SK-N-SH (cell line): ENCODE measurements at regions of chr5 and their contacts with region 1.

Region 1: DNA sequence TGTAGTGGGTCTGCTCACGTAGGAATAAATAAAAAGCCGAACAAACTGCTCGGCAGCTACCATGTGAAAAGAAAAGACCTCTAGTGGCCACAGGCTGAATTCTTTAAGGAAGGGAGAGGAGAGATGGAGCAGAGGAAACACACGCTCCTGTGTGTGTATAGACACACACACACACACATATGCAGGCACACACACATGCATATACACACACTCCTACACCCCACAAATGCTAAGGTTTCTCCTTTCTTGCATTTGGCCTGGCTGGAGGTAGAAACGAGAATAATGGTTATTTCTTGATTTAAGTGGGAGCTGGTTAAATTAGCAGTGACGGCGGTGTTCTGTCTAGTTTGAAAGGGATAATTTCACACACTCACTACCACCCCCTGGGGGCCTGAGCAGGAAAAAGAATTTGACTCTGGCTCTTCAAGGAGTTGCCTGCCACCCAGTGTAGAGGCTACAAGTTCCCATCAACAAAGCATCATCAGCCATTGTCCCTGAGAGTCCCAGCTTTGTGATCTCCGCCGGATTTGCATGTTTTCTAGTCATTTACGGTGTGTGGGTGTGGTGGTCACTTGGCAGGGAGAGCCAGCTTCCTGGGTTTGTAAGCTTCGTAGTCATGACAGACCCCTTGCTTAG is at the start of gene INSYN2B:
- DNase-seq: peak; percentile 63
- H3K4me3 ChIP-seq: peak within 1 kb of the TSS; percentile 58 to 85
- H3K27ac ChIP-seq: peak within 1 kb of the TSS; percentile 32 to 92; a peak in 3 of 4 replicates
- H3K4me1 ChIP-seq: peaks cover 2 to 24% of the 10 kb centered on the region in 2 experiments; a peak in 3 of 4 replicates
- H3K27me3 ChIP-seq: no peaks in the 10 kb centered on the region
- CTCF ChIP-seq: peak; percentile 90
- EP300 ChIP-seq: no peak
- RAD21 ChIP-seq: peak; percentile 67
- polyA plus RNA-seq, gene INSYN2B: 9.2 and 13.4 TPM in 2 replicates

Region 2: DNA sequence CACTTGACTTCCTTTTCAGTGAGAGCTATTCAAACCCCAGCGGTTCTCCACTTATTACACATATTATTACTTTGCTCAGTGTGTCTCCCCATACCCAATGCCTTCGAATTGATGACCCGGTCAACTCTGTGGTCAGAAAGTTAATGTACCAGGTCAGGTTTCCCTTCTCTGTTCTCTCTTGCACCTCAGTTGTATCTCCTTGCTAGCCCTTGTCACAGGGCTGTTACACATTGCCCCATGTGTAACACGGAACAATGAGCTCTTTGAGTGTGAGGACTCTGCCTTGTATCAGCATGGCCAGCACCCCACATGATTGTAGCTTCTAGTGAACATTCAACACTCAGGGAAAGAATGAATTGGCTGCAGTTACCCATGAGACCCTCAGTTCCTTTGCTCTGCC is 269.9 kb before region 1 on chr5:
- CTCF ChIA-PET with region 1: interaction called, 34 read pairs
- POLR2A ChIA-PET with region 1: no interaction called
- DNase-seq: no peak
- H3K4me3 ChIP-seq: no peak overlapping the region
- H3K27ac ChIP-seq: no peak overlapping the region
- H3K4me1 ChIP-seq: peaks cover 0 to 18% of the 10 kb centered on the region in 2 experiments; a peak in 3 of 4 replicates
- H3K27me3 ChIP-seq: no peaks in the 10 kb centered on the region
- CTCF ChIP-seq: no peak
- EP300 ChIP-seq: no peak
- RAD21 ChIP-seq: no peak

Region 3: DNA sequence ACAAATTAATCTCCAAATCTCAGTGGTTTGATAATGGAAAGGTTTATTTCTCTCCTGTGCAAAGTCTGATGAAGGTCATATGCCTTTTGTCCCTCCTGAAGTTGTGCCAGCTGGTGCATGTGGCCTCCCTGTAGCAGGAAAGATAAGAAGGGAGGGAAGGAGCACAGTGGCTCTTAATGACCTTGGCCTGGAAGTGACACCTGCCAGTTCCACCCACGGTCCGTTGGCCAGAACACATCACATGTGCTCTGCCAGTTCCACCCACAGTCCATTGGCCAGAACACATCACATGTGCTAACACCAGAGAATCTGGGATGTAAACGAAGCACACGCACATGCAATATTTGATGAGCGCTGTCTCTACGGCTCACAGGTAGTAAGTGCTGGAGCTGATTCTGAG is 212.6 kb before region 1 on chr5:
- CTCF ChIA-PET with region 1: interaction called, 12 read pairs
- POLR2A ChIA-PET with region 1: no interaction called
- DNase-seq: peak; percentile 27
- H3K4me3 ChIP-seq: no peak overlapping the region
- H3K27ac ChIP-seq: no peak overlapping the region
- H3K4me1 ChIP-seq: peaks cover 19 to 29% of the 10 kb centered on the region in 2 experiments
- H3K27me3 ChIP-seq: no peaks in the 10 kb centered on the region
- CTCF ChIP-seq: no peak
- EP300 ChIP-seq: peak in 1 of 2 experiments; percentile 52; a peak in 2 of 4 replicates
- RAD21 ChIP-seq: no peak

Region 4: GRCh38 chr5:169923988-169924387 is 56.5 kb before region 1 on chr5:
- CTCF ChIA-PET with region 1: interaction called, 15 read pairs
- POLR2A ChIA-PET with region 1: no interaction called
- DNase-seq: no peak
- H3K4me3 ChIP-seq: no peak overlapping the region
- H3K27ac ChIP-seq: no peak overlapping the region
- H3K4me1 ChIP-seq: peaks cover 3 to 11% of the 10 kb centered on the region in 2 experiments; a peak in 3 of 4 replicates
- H3K27me3 ChIP-seq: no peaks in the 10 kb centered on the region
- CTCF ChIP-seq: no peak
- EP300 ChIP-seq: no peak
- RAD21 ChIP-seq: no peak

Region 5: GRCh38 chr5:169997798-169998197 is 17.3 kb after region 1 on chr5:
- CTCF ChIA-PET with region 1: interaction called, 23 read pairs
- POLR2A ChIA-PET with region 1: no interaction called
- DNase-seq: no peak
- H3K4me3 ChIP-seq: no peak overlapping the region
- H3K27ac ChIP-seq: no peak overlapping the region
- H3K4me1 ChIP-seq: no peaks in the 10 kb centered on the region; a peak in 1 of 4 replicates
- H3K27me3 ChIP-seq: no peaks in the 10 kb centered on the region
- CTCF ChIP-seq: no peak
- EP300 ChIP-seq: no peak
- RAD21 ChIP-seq: no peak

Region 6: GRCh38 chr5:170070556-170071412 is 90.2 kb after region 1 on chr5:
- CTCF ChIA-PET with region 1: interaction called, 10 read pairs
- POLR2A ChIA-PET with region 1: no interaction called
- DNase-seq: peak; percentile 43
- H3K4me3 ChIP-seq: no peak overlapping the region; a peak in 1 of 4 replicates
- H3K27ac ChIP-seq: no peak overlapping the region
- H3K4me1 ChIP-seq: no peaks in the 10 kb centered on the region
- H3K27me3 ChIP-seq: no peaks in the 10 kb centered on the region
- CTCF ChIP-seq: peak; percentile 54
- EP300 ChIP-seq: no peak
- RAD21 ChIP-seq: peak; percentile 37; the same call in 1 of the 2 replicates